Right cardiac atrium (tissue), 5 donors: ENCODE measurements at regions of chr3 and their contacts with region 1.

Region 1: GRCh38 chr3:45210308-45211041 is 15.6 kb downstream of the TMEM158 start:
- DNase-seq: peak; percentile 83 to 93 (median 92)
- ATAC-seq: peak; percentile 93 to 94
- H3K4me3 ChIP-seq: no peak overlapping the region
- H3K27ac ChIP-seq: no peak overlapping the region
- H3K4me1 ChIP-seq: no peaks in the 10 kb centered on the region
- H3K27me3 ChIP-seq: no peaks in the 10 kb centered on the region

Region 2: DNA sequence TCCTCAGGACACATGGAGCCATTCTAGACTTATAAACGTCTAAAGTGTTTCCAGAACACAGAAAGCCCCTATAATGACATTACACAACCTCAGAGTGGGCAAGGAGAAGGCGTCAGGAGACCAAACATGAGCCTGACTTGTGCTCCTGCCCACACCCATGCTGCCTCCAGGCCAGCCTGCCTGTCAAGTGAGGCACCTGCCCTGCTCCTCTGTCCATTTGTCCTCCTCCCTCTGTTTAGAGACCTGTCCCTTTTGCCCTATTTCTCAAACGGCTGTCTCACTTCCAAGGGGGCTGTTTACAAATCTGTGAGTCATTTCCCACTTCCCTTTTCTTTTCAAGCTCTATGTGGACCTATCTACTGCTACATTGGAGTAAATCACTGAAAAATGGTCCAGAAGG is 255.5 kb before region 1 on chr3:
- intact Hi-C with region 1: no loop called
- DNase-seq: no peak
- ATAC-seq: peak in 1 of 2 donors; percentile 29
- H3K4me3 ChIP-seq: no peak overlapping the region
- H3K27ac ChIP-seq: no peak overlapping the region
- H3K4me1 ChIP-seq: no peaks in the 10 kb centered on the region
- H3K27me3 ChIP-seq: no peaks in the 10 kb centered on the region

Region 3: DNA sequence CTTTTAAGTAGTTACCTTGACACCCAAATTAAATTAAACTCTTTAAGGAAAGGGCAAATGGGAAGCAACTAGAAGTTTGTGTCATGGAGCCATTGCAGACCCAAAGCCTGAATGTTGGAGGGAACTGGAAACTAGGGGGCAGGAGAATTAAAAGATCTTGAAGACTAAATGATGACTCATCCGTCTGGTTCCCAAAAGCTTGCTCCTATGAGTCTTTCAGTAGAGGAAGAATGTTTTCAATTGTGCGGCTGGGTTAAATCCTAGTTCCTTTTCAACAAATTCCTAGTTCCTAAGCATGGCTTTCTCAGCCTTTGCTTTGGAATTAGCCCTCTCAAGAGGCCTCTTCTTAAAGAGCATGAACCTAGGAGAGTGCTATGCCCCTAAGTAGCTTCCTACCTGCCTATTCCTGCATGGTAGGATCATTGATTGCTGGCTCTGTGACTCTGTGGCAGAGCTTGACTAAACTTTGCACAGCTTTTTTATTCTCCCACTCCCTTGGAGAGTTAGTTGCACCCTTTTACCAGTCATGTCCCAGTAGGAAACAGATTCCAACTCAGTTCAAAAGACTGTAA is 166.7 kb before region 1 on chr3:
- intact Hi-C with region 1: loop called (anchors 2 kb)
- DNase-seq: no peak
- ATAC-seq: no peak
- H3K4me3 ChIP-seq: no peak overlapping the region
- H3K27ac ChIP-seq: peak overlapping the region; percentile 30
- H3K4me1 ChIP-seq: no peaks in the 10 kb centered on the region
- H3K27me3 ChIP-seq: no peaks in the 10 kb centered on the region